Activated CD4-positive, alpha-beta T cell treated with anti-CD3 and anti-CD28 coated beads, Interleukin-2, amount 10 ng/mL, durations not matched to agents 24 days and 14 days (primary cell): ENCODE measurements at regions of chr11 and their contacts with region 1.

Region 1: DNA sequence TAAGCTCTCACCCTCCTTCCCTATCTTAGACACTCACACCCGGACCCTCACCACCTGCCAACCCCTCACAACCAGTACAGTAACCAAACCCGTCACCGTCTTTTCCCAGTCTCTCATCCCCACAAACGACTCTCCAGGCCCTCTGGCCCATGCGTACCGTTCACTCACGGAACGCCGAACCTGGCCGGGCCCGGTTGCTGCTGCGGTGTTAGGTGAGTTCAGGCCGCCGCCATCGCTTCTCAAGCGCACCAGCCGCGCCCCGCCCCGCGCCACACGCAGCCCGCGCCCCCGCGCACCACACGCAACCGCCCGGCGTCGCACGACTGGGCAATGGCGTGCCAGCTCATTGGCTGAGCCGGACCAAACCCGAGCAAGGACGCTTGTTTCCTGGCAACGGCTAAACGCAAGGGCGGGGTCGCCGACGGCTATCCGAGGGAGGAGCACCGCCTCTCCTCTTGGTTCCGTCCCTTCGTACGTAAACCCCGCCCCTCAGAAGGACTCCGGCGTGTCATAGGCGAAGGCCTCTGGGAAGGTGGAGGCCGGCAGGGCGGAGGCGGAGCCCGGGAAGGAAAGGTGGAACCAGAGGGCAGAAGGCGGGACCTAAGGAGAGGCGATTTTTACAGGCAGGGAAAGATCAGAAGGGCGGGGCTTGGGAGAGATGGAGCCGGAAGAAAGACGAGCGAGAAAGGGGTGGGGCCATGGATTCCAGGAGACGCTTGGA is at the start of gene FHIP1B:
- DNase-seq: peak; percentile 100
- H3K4me3 Mint-ChIP-seq: peak within 1 kb of the TSS; percentile 95
- H3K27ac Mint-ChIP-seq: peak within 1 kb of the TSS; percentile 90
- H3K4me1 Mint-ChIP-seq: peaks cover 35% of the 10 kb centered on the region
- H3K27me3 Mint-ChIP-seq: peaks cover 1% of the 10 kb centered on the region
- total RNA-seq, gene FHIP1B: 19.3 and 20.2 TPM in 2 replicates

Region 2: GRCh38 chr11:6124245-6124644 is 110.3 kb before region 1 on chr11:
- intact Hi-C with region 1: no loop called
- DNase-seq: no peak
- H3K4me3 Mint-ChIP-seq: no peak overlapping the region
- H3K27ac Mint-ChIP-seq: no peak overlapping the region
- H3K4me1 Mint-ChIP-seq: no peaks in the 10 kb centered on the region
- H3K27me3 Mint-ChIP-seq: peaks cover 4% of the 10 kb centered on the region

Region 3: DNA sequence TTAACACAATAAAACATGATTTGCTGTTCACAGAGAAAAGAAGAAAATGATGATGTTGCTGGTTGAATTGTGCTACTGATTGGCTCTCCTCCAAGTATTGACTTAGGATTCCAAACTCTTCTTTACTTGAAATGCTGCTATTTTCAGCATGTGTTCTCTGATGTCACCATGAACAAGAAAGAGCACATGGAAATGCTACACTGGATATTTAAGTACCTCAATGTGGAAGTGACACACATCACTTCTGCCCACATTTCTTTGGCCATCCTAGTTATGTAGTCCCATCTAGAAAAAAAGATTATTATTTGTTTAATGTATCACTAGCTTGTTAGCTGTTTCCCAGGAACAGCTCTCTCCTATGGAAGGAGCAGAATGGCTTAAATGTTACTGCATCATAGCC is 91.6 kb before region 1 on chr11:
- intact Hi-C with region 1: no loop called
- DNase-seq: no peak
- H3K4me3 Mint-ChIP-seq: no peak overlapping the region
- H3K27ac Mint-ChIP-seq: no peak overlapping the region
- H3K4me1 Mint-ChIP-seq: no peaks in the 10 kb centered on the region
- H3K27me3 Mint-ChIP-seq: peaks cover 17% of the 10 kb centered on the region

Region 4: DNA sequence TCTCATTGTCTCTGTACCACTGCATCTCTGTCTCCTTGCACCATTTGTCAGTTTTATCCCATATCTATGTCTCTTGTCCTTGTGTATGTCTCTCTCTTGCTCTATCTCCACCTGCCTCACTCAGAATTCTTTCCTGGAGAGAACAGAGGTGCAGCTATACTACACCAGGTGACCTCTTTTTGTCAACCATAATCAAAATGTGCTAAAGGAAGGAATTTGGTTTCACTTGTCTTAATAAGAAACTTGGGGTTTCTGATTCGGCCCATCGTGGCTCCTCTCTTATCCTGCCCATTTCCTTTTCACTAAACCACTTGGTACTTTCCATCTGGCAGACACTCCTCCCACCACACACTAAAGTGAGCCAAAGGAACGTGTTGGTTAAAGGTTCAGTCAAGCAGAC is 31.2 kb before region 1 on chr11:
- intact Hi-C with region 1: loop called (anchors 2 kb)
- DNase-seq: peak; percentile 75
- H3K4me3 Mint-ChIP-seq: peak overlapping the region; percentile 18
- H3K27ac Mint-ChIP-seq: peak overlapping the region; percentile 41
- H3K4me1 Mint-ChIP-seq: peaks cover 27% of the 10 kb centered on the region
- H3K27me3 Mint-ChIP-seq: no peaks in the 10 kb centered on the region

Region 5: DNA sequence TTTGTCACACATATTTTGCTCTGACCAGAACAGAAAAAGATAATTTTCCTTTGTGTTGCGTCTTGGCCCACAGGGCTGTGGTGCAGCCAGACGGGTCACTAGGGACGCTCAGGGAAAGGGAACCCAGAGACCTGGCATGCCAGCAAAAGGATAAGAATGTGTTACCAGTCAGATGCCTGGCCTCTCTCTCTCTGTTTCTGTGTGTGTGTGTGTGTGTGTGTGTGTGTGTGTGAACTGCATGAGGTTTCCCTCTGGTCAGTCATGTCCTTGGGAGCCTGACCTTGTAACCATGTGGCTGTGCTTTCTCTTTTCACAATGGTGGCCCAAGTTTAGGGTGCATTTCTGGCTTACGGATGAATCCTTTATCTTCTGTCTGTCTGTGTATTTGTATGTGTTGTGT is 50.5 kb after region 1 on chr11:
- intact Hi-C with region 1: no loop called
- DNase-seq: no peak
- H3K4me3 Mint-ChIP-seq: no peak overlapping the region
- H3K27ac Mint-ChIP-seq: no peak overlapping the region
- H3K4me1 Mint-ChIP-seq: no peaks in the 10 kb centered on the region
- H3K27me3 Mint-ChIP-seq: peaks cover 60% of the 10 kb centered on the region

Region 6: DNA sequence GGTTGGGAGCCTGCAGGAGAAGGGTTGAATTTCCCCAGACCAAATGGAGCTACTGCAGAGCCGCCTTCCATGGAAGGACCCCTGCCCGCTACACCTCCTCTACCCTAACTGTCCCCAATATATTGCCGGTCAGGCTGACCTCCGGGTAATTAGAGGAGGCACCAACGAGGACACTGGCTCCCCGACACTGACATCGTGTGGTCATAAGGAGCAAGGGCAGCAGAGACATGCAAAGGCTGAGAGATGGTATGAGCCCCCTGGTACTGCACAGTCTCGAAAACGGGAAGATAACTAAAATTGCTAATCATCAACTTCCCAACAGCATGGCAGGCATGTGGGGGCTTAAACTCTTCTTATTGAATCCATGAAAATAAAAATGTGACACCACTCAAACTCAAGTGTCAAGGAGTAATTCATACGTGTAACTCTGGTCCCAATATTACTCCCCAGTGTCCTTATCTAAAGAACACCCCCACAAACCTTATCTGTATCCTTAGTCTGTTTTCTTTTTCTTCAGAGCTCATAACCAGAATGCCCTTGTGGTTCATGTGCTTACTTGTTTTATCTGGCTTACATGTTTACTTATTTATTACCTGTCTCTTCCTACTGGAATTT is 81.4 kb after region 1 on chr11:
- intact Hi-C with region 1: loop called (anchors 1 kb)
- DNase-seq: peak; percentile 80
- H3K4me3 Mint-ChIP-seq: no peak overlapping the region
- H3K27ac Mint-ChIP-seq: no peak overlapping the region
- H3K4me1 Mint-ChIP-seq: peaks cover 25% of the 10 kb centered on the region
- H3K27me3 Mint-ChIP-seq: peaks cover 47% of the 10 kb centered on the region

Region 7: GRCh38 chr11:6419009-6419631 is 184.6 kb after region 1 on chr11 and contains the start of gene APBB1:
- intact Hi-C with region 1: loop called (anchors 10 kb)
- DNase-seq: peak; percentile 93
- H3K4me3 Mint-ChIP-seq: no peak within 1 kb of the TSS
- H3K27ac Mint-ChIP-seq: peak within 1 kb of the TSS; percentile 45
- H3K4me1 Mint-ChIP-seq: peaks cover 3% of the 10 kb centered on the region
- H3K27me3 Mint-ChIP-seq: peaks cover 33% of the 10 kb centered on the region
- total RNA-seq, gene APBB1: 24.1 TPM in 2 replicates

Region 8: GRCh38 chr11:6481012-6481923 is 246.7 kb after region 1 on chr11 and contains the starts of genes ARFIP2 and TIMM10B:
- intact Hi-C with region 1: loop called (anchors 1 kb)
- DNase-seq: peak; percentile 99
- H3K4me3 Mint-ChIP-seq: peak within 1 kb of the TSS; percentile 94
- H3K27ac Mint-ChIP-seq: peak within 1 kb of the TSS; percentile 98
- H3K4me1 Mint-ChIP-seq: peaks cover 30% of the 10 kb centered on the region
- H3K27me3 Mint-ChIP-seq: no peaks in the 10 kb centered on the region
- total RNA-seq, gene ARFIP2: 50.8 and 51.2 TPM in 2 replicates
- total RNA-seq, gene TIMM10B: 41.3 and 47.4 TPM in 2 replicates

Region 9: DNA sequence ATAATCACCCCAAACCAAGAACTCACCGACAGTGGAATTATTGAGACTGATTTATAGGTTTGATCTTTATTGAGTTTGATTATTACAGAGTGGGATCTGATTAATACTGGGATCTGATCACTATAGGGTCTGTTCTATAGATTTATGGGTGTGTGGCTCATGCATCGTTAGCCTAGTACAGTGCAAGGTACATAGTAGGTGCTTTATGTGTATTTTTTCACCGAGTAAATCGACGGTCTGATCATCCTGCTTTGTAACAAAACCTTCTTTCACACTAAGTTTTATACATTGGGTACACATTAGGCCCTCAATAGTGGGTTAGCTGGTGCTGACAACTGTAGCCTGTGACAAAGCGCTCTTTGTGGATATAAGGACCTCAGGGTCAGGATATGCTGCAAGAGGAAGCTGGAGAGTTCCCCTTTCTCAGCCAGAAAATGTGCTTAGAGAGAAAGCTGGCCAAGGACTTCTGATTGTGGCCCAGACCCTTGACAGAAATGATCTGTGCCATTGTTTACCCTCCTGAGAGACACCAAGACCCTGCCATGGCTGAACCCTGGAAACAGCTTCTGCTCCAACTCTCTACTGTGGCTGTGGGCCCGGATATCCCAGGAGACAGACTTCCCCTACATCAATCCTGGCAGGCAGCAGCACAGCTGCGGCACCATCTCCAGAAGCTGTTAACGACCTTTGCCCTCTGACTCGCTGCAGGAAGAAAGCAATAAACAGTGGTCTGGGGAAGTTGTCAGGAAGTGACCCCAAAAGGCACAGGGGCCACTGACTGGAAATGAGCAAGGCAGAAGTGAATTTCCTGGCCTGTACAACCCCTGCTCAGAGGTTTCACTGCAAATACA is 400.8 kb after region 1 on chr11:
- intact Hi-C with region 1: no loop called
- DNase-seq: no peak
- H3K4me3 Mint-ChIP-seq: no peak overlapping the region
- H3K27ac Mint-ChIP-seq: no peak overlapping the region
- H3K4me1 Mint-ChIP-seq: peaks cover 6% of the 10 kb centered on the region
- H3K27me3 Mint-ChIP-seq: no peaks in the 10 kb centered on the region

Region 10: DNA sequence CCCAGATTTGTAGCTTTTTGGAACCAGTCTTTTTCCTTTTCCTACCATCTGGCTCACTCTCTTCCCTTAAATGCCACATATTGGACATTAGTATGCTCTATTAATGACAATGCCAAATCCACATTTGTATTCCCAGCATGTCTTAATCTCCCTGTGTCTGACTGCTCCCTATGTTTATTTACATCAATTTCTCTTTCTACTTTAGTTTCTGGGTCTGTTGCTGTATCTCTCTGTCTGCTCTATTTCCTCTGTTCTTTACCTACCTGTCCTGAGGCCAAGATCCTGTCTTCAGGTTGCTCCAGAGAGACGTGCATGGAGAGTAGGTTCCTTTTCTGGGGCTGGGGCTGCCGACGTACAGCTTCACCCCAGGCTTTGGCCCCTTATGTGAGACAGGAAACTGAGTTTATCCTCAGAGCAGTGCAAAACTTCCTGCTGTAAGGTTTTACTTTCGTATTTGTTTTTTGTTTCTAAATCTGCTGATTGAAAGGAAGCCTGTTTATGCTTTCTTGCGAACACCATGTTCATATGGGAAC is 511.6 kb after region 1 on chr11:
- intact Hi-C with region 1: loop called (anchors 5 kb)
- DNase-seq: peak; percentile 87
- H3K4me3 Mint-ChIP-seq: no peak overlapping the region
- H3K27ac Mint-ChIP-seq: no peak overlapping the region
- H3K4me1 Mint-ChIP-seq: peaks cover 33% of the 10 kb centered on the region
- H3K27me3 Mint-ChIP-seq: no peaks in the 10 kb centered on the region